Activated T-helper 1 cell treated with anti-CD3 and anti-CD28 coated beads, Interleukin-12 subunit alpha, Interleukin-12 subunit beta, Interleukin-2, Interleukin-4 antibody, amounts not matched to agents 30 ng/mL and 10 ng/mL and 1 ng/mL, durations not matched to agents 14 hours and 24 hours and 36 hours (primary cell): ENCODE measurements at regions of chr4 and their contacts with region 1.

Region 1: DNA sequence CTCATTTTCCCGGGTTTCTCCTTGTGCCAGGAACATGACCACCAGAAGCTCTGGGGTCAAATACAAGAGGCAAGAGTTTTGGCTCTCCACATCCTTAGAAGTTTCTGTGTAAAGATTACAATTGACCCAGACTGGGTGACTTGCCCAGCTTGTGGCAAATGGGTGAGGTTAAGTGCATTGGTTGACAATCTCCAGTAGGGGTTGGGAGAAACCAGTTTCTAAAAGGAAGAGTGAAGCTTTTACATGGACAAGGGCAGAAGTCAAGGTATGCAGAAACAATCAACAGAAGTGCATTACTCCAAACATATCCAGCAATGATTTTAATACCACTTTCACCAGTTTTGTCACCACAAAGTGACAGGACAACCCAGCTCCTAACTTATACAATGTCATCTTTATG is 89.8 kb downstream of the SLC39A8 start:
- DNase-seq: no peak
- H3K4me3 Mint-ChIP-seq: no peak overlapping the region
- H3K27ac Mint-ChIP-seq: no peak overlapping the region
- H3K4me1 Mint-ChIP-seq: no peaks in the 10 kb centered on the region
- H3K27me3 Mint-ChIP-seq: no peaks in the 10 kb centered on the region

Region 2: DNA sequence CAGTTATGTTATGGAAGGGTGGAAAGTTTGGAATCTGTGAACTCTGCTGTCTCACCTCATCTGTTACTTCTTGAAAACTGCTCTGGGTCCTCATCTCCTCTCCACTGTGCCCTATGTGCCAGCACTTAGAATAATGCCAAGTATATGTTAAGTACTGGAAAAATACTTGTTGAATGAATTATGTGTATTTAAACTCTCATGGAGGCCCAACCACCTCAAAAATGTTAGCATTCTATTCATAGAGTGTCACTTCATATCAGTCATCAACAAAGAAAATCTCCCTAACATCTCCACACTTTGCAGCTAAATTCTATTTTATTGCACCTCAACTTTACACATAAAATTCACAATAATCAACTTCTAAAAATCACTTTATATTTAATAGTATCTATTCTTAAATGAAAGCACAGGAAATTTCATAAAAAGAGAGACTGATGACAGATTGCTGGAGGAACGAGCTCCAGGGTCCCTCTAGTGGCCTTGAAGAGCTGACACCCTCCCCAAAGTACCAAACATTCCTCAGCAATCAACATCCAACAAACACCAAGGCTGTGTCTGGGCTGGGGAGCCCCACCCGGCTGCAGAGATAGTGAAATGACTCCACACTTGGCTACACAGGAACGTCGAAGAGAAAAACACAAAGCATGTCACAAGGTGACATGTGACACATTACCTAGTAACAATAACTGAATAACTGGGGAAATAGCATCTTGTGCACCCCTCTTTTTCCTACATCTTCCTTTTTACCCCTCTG is 44.1 kb after region 1 on chr4:
- intact Hi-C with region 1: loop called (anchors 1 kb)
- DNase-seq: peak; percentile 7
- H3K4me3 Mint-ChIP-seq: no peak overlapping the region
- H3K27ac Mint-ChIP-seq: no peak overlapping the region
- H3K4me1 Mint-ChIP-seq: peaks cover 7% of the 10 kb centered on the region
- H3K27me3 Mint-ChIP-seq: no peaks in the 10 kb centered on the region

Region 3: DNA sequence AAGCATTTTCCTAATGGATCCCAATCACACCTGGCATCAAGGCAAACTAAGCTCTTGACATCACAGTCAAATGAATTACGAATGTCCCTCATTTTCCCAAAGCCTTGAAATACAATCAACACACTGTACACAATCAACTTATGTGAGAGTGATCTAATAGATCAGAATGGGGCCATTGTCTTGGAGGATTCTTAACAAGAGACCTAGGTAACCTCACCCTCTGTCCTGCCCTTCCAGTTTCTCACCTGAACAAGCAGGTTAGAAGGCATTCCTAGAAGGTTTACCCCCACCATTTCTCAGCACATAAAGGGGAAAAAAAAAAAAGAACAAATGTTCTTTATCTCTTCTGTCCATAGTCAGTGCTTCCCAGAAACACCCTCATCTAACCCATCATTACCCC is 83.6 kb after region 1 on chr4:
- intact Hi-C with region 1: no loop called
- DNase-seq: no peak
- H3K4me3 Mint-ChIP-seq: no peak overlapping the region
- H3K27ac Mint-ChIP-seq: no peak overlapping the region
- H3K4me1 Mint-ChIP-seq: peaks cover 63% of the 10 kb centered on the region
- H3K27me3 Mint-ChIP-seq: no peaks in the 10 kb centered on the region